CD4-positive, alpha-beta T cell (primary cell): ENCODE measurements at regions of chr1 and their contacts with region 1.

Region 1: DNA sequence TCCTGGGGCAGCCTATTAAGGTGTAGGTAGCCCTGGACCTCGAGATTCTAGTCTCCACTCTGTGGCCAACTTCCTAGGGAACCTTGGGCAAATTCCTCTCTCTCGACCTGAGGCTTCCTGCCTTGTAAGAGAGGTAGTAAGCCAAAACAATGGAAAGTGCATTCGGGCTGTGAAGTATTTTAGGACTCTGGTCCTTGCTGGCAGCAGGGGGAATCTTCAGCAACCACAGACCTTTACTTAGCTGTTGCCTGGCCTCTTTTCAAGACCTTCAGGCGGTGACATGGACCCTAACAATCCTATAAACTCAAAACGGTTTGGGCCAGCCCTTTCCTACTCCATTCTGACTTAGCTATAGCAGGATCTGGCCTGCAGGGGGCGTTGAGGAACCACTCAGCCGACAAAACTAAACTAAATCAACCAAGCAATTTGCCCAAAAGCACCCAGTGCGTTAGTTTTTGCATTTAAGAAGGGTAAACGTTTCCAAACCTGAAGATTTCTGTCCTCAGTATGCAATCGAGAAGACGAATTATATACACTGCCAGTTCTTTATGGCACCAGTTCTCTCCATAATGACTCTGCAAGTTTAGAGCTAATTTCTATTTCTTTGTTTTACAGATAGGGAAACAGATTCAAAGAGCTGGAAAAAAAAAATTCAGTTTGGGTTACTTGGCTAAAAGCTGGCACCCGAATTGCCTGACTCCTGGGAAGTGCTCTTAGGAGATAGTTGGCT is 10.9 kb upstream of the SESN2 start:
- DNase-seq: peak; percentile 70 to 91 (median 78)
- ATAC-seq: peak; percentile 23
- H3K4me3 ChIP-seq: peak overlapping the region; percentile 78
- H3K4me3 Mint-ChIP-seq: peak overlapping the region; percentile 87
- H3K27ac ChIP-seq: peak overlapping the region; percentile 80 to 99
- H3K27ac Mint-ChIP-seq: peak overlapping the region; percentile 86
- H3K4me1 ChIP-seq: peaks cover 54% of the 10 kb centered on the region
- H3K4me1 Mint-ChIP-seq: peaks cover 49% of the 10 kb centered on the region
- H3K27me3 ChIP-seq: no peaks in the 10 kb centered on the region
- H3K27me3 Mint-ChIP-seq: no peaks in the 10 kb centered on the region
- CTCF ChIP-seq: peak; percentile 92

Region 2: DNA sequence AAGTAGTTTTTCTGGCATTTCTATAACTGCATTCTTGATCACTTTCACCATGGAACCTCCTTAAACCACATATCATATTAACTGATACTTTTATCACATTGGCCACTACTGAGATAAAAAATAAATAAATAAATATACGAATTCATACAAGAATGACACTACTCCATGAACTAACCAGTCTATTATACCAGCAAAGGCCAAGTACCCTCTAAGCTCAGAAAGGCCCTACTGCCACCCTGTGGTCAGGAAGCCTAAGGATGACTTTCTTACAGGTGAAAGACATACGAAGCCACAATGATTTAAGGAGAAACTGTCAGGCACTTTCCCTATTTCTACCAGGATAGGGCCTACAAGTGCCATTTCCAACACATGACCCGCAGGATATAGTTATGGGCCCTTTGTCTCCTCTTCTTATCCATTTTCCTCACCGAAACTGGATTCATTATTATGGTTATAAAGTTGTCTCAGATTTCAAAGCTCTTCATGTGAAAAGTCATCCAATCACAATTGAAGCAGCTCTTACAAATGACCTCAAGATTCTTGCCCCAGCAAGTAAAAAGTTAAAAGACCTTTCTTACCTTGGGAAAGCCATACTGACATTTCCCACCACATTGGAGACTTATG is 39.5 kb before region 1 on chr1:
- CTCF ChIA-PET with region 1: no interaction called
- POLR2A ChIA-PET with region 1: no interaction called
- intact Hi-C with region 1: no loop called
- DNase-seq: peak; percentile 38 to 81 (median 54)
- ATAC-seq: peak; percentile 86
- H3K4me3 ChIP-seq: no peak overlapping the region
- H3K4me3 Mint-ChIP-seq: no peak overlapping the region
- H3K27ac ChIP-seq: no peak overlapping the region
- H3K27ac Mint-ChIP-seq: no peak overlapping the region
- H3K4me1 ChIP-seq: no peaks in the 10 kb centered on the region
- H3K4me1 Mint-ChIP-seq: peaks cover 7% of the 10 kb centered on the region
- H3K27me3 ChIP-seq: no peaks in the 10 kb centered on the region
- H3K27me3 Mint-ChIP-seq: no peaks in the 10 kb centered on the region
- CTCF ChIP-seq: peak; percentile 68

Region 3: GRCh38 chr1:28235755-28236655 is 12.4 kb before region 1 on chr1 and contains the start of gene ATP5IF1:
- CTCF ChIA-PET with region 1: interaction called, 25 read pairs
- POLR2A ChIA-PET with region 1: interaction called, 131 read pairs
- intact Hi-C with region 1: loop called (anchors 1 kb)
- DNase-seq: peak; percentile 87 to 98 (median 92)
- ATAC-seq: peak; percentile 96
- H3K4me3 ChIP-seq: peak within 1 kb of the TSS; percentile 97
- H3K4me3 Mint-ChIP-seq: no peak within 1 kb of the TSS
- H3K27ac ChIP-seq: peak within 1 kb of the TSS; percentile 80 to 81
- H3K27ac Mint-ChIP-seq: no peak within 1 kb of the TSS
- H3K4me1 ChIP-seq: peaks cover 48% of the 10 kb centered on the region
- H3K4me1 Mint-ChIP-seq: peaks cover 19% of the 10 kb centered on the region
- H3K27me3 ChIP-seq: no peaks in the 10 kb centered on the region
- H3K27me3 Mint-ChIP-seq: no peaks in the 10 kb centered on the region
- CTCF ChIP-seq: no peak
- total RNA-seq, gene ATP5IF1: 77.4 to 78.0 TPM

Region 4: DNA sequence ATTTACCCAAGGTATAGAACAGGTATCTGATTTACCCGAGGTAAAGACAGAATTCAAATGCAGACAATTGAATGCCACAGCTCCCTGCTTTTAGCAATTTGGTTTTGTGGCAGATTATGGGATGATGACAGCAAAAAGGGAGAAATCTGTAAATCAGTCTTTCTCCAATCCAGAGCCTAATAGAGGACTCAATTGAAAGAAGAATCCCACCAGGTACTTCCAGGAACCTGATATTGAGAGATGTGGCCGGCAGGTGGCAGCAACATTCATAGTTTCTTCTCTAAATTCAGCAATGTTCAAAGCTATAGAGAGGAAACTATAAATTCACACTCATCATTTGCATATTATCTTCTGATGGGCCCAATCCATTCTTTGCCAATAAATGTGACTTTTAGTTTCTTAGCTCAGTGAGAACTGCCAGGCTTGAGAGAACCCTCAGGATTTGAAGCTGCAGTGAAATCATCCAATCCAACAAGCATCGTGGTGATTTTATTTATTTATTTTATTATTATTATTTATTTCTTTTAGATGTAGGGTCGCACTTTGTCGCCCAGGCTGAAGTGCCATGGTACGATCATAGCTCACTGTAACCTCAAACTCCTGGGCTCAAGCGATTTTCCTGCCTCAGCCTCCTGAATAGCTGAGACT is 111.3 kb after region 1 on chr1:
- CTCF ChIA-PET with region 1: interaction called, 9 read pairs
- POLR2A ChIA-PET with region 1: interaction called, 6 read pairs
- intact Hi-C with region 1: loop called in 1 of 2 experiments (anchors 1 kb)
- DNase-seq: peak; percentile 54 to 83 (median 68)
- ATAC-seq: peak; percentile 75
- H3K4me3 ChIP-seq: no peak overlapping the region
- H3K4me3 Mint-ChIP-seq: no peak overlapping the region
- H3K27ac ChIP-seq: no peak overlapping the region
- H3K27ac Mint-ChIP-seq: no peak overlapping the region
- H3K4me1 ChIP-seq: no peaks in the 10 kb centered on the region
- H3K4me1 Mint-ChIP-seq: no peaks in the 10 kb centered on the region
- H3K27me3 ChIP-seq: no peaks in the 10 kb centered on the region
- H3K27me3 Mint-ChIP-seq: no peaks in the 10 kb centered on the region
- CTCF ChIP-seq: peak; percentile 85

Region 5: GRCh38 chr1:28505406-28506187 is 257.1 kb after region 1 on chr1 and contains the start of gene RCC1:
- CTCF ChIA-PET with region 1: no interaction called
- POLR2A ChIA-PET with region 1: interaction called, 8 read pairs
- intact Hi-C with region 1: loop called in 1 of 2 experiments (anchors 5 kb)
- DNase-seq: peak; percentile 86 to 99 (median 92)
- ATAC-seq: peak; percentile 92
- H3K4me3 ChIP-seq: peak within 1 kb of the TSS; percentile 86
- H3K4me3 Mint-ChIP-seq: peak within 1 kb of the TSS; percentile 94
- H3K27ac ChIP-seq: peak within 1 kb of the TSS; percentile 65 to 79
- H3K27ac Mint-ChIP-seq: peak within 1 kb of the TSS; percentile 88
- H3K4me1 ChIP-seq: peaks cover 38% of the 10 kb centered on the region
- H3K4me1 Mint-ChIP-seq: peaks cover 49% of the 10 kb centered on the region
- H3K27me3 ChIP-seq: no peaks in the 10 kb centered on the region
- H3K27me3 Mint-ChIP-seq: no peaks in the 10 kb centered on the region
- CTCF ChIP-seq: no peak
- total RNA-seq, gene RCC1: 8.5 to 9.9 TPM

Region 6: DNA sequence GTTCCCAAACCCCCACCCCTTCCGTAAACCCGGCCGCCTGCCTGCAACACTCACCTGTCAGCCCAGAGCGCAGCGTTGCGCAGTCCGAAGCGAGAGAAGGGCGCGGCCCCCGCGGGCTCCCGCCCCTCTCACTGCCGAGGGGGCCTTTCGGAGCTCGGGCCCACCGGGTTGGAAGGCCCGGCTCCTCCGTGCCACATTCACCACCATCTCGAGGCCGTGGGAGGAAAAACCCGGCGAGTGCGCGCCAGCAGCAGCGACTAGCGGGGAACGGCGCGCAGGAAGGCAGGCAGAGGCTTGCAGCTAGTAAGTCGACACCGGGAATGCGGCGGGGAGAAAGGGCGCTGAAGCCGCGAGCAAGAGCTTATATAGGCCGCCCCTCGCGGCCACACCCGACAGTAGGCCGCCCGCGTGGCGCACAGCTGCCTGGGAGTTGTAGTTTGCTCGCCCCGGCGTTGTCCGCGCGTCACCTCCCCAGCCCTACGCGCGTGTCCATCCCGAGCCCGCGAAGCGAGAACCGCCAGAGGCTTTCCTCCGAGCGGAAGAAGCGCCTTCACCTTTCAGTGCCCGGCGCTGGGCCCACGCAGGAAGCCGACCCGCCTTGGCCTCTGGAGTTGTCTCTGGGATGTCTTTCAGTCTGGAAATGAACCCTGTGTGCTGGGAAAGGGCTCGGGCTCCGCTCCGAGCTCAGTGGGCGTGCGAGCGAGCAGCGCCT is 333.2 kb after region 1 on chr1:
- CTCF ChIA-PET with region 1: interaction called, 3 read pairs
- POLR2A ChIA-PET with region 1: interaction called, 33 read pairs
- intact Hi-C with region 1: loop called in 1 of 2 experiments (anchors 10 kb)
- DNase-seq: peak; percentile 85 to 97 (median 92)
- ATAC-seq: peak; percentile 83
- H3K4me3 ChIP-seq: peak overlapping the region; percentile 93
- H3K4me3 Mint-ChIP-seq: peak overlapping the region; percentile 94
- H3K27ac ChIP-seq: peak overlapping the region; percentile 70 to 83
- H3K27ac Mint-ChIP-seq: peak overlapping the region; percentile 81
- H3K4me1 ChIP-seq: peaks cover 39% of the 10 kb centered on the region
- H3K4me1 Mint-ChIP-seq: peaks cover 48% of the 10 kb centered on the region
- H3K27me3 ChIP-seq: no peaks in the 10 kb centered on the region
- H3K27me3 Mint-ChIP-seq: no peaks in the 10 kb centered on the region
- CTCF ChIP-seq: no peak

Region 7: GRCh38 chr1:28877132-28877781 is 628.8 kb after region 1 on chr1:
- CTCF ChIA-PET with region 1: interaction called, 3 read pairs
- POLR2A ChIA-PET with region 1: no interaction called
- intact Hi-C with region 1: loop called (anchors 1 to 5 kb)
- DNase-seq: peak; percentile 61 to 88 (median 72)
- ATAC-seq: peak; percentile 84
- H3K4me3 ChIP-seq: no peak overlapping the region
- H3K4me3 Mint-ChIP-seq: no peak overlapping the region
- H3K27ac ChIP-seq: no peak overlapping the region
- H3K27ac Mint-ChIP-seq: no peak overlapping the region
- H3K4me1 ChIP-seq: peaks cover 11% of the 10 kb centered on the region
- H3K4me1 Mint-ChIP-seq: peaks cover 7% of the 10 kb centered on the region
- H3K27me3 ChIP-seq: peaks cover 0 to 2% of the 10 kb centered on the region in 2 experiments
- H3K27me3 Mint-ChIP-seq: no peaks in the 10 kb centered on the region
- CTCF ChIP-seq: peak; percentile 97

Region 8: GRCh38 chr1:28933277-28933676 is 684.8 kb after region 1 on chr1:
- CTCF ChIA-PET with region 1: no interaction called
- POLR2A ChIA-PET with region 1: no interaction called
- intact Hi-C with region 1: no loop called
- DNase-seq: peak in 4 of 14 experiments; percentile 21 to 52 (median 40)
- ATAC-seq: peak; percentile 84
- H3K4me3 ChIP-seq: no peak overlapping the region
- H3K4me3 Mint-ChIP-seq: peak overlapping the region; percentile 55
- H3K27ac ChIP-seq: peak overlapping the region in 1 of 2 donors; percentile 4
- H3K27ac Mint-ChIP-seq: peak overlapping the region; percentile 78
- H3K4me1 ChIP-seq: peaks cover 49% of the 10 kb centered on the region
- H3K4me1 Mint-ChIP-seq: peaks cover 75% of the 10 kb centered on the region
- H3K27me3 ChIP-seq: no peaks in the 10 kb centered on the region
- H3K27me3 Mint-ChIP-seq: no peaks in the 10 kb centered on the region
- CTCF ChIP-seq: no peak

Region 9: DNA sequence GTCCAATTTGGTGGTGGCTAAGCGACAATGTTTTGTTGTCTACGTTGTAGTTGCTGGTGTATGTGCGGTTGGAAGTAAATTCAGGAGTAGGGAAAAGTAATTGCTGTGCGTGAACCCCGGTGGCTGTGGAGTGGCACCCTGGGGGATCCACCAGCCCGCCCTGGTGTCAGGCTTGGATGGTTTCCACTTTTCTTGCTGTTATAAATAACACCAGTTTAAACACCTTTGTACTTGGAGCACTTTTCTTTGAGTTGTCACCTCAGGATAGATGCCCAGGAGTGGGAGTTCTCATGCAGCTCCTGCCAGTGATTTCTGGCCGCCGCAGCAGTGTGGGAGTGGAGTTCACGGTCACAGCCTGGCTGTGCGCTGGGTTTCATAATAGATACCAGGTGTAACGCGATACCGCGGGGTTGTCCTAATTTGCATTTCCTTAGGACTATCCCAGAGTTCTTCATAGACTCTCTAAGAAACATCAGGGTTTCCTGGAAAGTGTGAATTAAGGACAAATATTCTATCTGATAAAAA is 888.0 kb after region 1 on chr1:
- CTCF ChIA-PET with region 1: no interaction called
- POLR2A ChIA-PET with region 1: no interaction called
- intact Hi-C with region 1: no loop called
- DNase-seq: no peak
- ATAC-seq: no peak
- H3K4me3 ChIP-seq: no peak overlapping the region
- H3K4me3 Mint-ChIP-seq: no peak overlapping the region
- H3K27ac ChIP-seq: no peak overlapping the region
- H3K27ac Mint-ChIP-seq: no peak overlapping the region
- H3K4me1 ChIP-seq: no peaks in the 10 kb centered on the region
- H3K4me1 Mint-ChIP-seq: no peaks in the 10 kb centered on the region
- H3K27me3 ChIP-seq: no peaks in the 10 kb centered on the region
- H3K27me3 Mint-ChIP-seq: peaks cover 15% of the 10 kb centered on the region
- CTCF ChIP-seq: no peak